AG04450 (cell line): ENCODE measurements at regions of chr10 and their contacts with region 1.

Region 1: DNA sequence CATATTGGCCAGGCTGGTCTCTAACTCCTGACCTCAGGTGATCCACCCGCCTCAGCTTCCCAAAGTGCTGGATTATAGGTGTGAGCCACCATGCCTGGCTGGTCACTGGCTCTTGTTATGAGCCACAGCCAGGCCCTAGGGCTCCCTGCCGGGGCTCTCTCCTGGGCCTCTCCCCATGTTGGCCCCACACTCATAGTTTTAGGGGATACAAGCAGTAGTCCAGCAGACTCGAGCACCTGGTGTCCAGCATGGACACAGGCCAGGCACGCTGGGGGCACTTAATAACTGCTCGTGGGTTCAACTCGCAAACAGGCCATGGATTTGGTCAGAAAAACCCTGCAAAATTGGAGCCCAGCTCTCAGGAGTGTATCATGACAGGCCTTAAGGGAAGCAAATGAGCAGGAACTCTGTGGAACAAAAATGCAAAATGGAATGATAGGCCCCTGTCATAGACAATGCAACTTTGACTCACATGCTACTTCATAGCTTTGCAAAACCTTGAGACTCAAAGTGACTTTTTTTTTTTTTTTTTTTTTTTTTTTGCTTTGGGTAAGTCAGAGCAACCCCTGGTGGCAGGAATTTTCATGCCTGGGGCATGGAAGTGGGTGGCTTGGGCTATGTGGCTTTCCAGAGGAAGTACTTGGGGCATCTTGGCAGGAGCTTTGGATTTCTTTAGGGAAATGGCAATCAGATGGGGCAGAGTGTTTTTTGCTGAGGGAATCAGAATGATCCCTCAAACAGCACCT is 62.5 kb downstream of the TACC2 start:
- DNase-seq: peak; percentile 29
- H3K4me3 ChIP-seq: no peak overlapping the region
- H3K27ac ChIP-seq: no peak overlapping the region
- H3K27me3 ChIP-seq: no peaks in the 10 kb centered on the region
- CTCF ChIP-seq: peak; percentile 84

Region 2: DNA sequence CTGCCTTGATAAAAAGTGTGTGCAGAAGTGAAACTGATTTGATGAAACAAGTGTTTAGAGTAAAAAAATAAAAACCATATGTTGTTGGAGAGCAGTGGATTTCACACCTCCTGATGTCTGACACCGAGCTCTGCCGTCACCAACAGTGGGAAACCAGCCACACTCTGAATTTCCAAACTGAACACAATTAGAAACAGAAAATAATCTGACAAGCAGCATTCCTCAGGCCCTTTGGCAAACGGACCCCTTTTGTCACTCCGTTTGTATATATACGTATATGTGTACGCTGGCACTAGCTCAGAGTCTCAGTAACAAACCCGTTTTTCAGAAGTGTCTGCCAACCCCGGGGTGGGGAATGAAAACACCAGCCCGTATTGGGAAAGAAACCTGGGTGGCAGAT is 30.0 kb before region 1 on chr10:
- CTCF ChIA-PET with region 1: interaction called, 10 read pairs
- POLR2A ChIA-PET with region 1: no interaction called
- DNase-seq: no peak
- H3K4me3 ChIP-seq: peak overlapping the region; percentile 20
- H3K27ac ChIP-seq: no peak overlapping the region
- H3K27me3 ChIP-seq: peaks cover 28% of the 10 kb centered on the region
- CTCF ChIP-seq: no peak

Region 3: DNA sequence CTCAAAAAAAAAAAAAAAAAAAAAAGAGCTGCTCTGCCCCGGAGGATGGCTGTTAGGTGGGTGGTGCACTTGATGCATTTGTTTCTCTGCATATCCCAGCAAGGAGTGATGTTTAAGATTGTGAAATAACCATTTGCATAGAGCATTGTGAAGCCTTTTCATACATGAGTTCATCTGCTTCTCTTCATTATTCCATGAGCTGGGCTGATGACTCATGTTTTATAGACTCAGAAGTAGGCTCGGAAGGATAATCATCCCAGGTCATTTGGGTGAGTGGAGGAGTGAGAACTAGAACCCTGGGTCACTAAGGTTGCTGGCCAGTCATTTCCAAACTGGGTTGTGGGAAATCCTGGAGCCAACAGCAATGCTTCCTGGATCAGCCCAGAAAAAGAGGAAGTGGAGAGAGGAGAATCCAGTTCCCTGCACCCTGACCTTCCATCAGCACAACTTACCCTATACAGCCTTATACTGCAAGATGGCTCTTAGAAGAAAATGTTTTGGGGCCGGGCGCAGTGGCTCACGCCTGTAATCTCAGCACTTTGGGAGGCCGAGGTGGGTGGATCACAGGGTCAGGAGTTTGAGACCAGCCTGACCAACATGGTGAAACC is 17.2 kb before region 1 on chr10:
- CTCF ChIA-PET with region 1: interaction called, 17 read pairs
- POLR2A ChIA-PET with region 1: no interaction called
- DNase-seq: no peak
- H3K4me3 ChIP-seq: no peak overlapping the region
- H3K27ac ChIP-seq: no peak overlapping the region
- H3K27me3 ChIP-seq: peaks cover 19% of the 10 kb centered on the region
- CTCF ChIP-seq: no peak

Region 4: DNA sequence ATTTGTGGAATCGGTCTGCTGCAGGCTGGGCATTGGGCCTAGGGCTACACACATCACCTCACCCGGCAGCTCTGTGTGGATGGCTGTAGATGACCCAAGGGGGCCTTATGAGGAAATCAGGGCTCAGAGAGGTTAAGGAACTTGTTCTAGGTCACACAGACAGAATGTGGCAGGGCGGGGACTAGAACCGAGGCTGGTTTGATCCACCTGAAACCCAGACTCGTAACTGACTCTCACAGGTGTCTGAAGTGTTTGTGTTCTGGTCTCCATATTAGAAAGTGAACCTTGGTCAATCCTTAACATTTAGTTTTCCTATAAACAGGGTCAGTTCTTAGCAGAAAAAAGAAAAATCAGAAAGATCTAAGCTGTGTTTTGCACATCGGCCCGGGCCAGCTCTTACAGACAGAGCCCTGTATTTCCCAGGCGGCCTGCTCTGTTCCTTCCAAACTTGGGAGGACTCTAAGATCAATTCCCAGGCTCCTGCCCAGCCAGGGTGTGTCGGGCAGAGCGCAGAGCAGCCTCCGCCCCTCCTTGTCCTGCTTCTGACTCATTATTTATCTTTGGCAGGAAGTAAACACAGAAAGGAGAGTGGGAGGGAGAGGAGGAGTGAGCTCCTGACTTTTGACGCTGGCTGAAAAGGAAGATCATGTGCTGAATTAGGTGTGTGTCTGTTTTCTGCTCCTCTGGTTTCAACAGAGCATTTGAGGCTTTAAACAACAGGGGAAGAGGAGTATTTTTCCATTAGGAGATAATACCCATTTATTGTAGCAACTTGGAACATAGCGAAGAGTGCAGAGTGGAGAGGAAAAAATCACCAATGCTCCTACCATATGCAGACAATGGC is 11.6 kb after region 1 on chr10:
- CTCF ChIA-PET with region 1: interaction called, 61 read pairs
- POLR2A ChIA-PET with region 1: no interaction called
- DNase-seq: peak; percentile 45
- H3K4me3 ChIP-seq: no peak overlapping the region
- H3K27ac ChIP-seq: peak overlapping the region; percentile 39
- H3K27me3 ChIP-seq: no peaks in the 10 kb centered on the region
- CTCF ChIP-seq: no peak

Region 5: GRCh38 chr10:122072491-122072890 is 21.1 kb after region 1 on chr10:
- CTCF ChIA-PET with region 1: interaction called, 24 read pairs
- POLR2A ChIA-PET with region 1: no interaction called
- DNase-seq: no peak
- H3K4me3 ChIP-seq: no peak overlapping the region
- H3K27ac ChIP-seq: no peak overlapping the region
- H3K27me3 ChIP-seq: peaks cover 2% of the 10 kb centered on the region
- CTCF ChIP-seq: no peak

Region 6: GRCh38 chr10:122078965-122079795 is 27.8 kb after region 1 on chr10:
- CTCF ChIA-PET with region 1: interaction called, 11 read pairs
- POLR2A ChIA-PET with region 1: no interaction called
- DNase-seq: no peak
- H3K4me3 ChIP-seq: no peak overlapping the region
- H3K27ac ChIP-seq: no peak overlapping the region
- H3K27me3 ChIP-seq: peaks cover 26% of the 10 kb centered on the region
- CTCF ChIP-seq: no peak

Region 7: DNA sequence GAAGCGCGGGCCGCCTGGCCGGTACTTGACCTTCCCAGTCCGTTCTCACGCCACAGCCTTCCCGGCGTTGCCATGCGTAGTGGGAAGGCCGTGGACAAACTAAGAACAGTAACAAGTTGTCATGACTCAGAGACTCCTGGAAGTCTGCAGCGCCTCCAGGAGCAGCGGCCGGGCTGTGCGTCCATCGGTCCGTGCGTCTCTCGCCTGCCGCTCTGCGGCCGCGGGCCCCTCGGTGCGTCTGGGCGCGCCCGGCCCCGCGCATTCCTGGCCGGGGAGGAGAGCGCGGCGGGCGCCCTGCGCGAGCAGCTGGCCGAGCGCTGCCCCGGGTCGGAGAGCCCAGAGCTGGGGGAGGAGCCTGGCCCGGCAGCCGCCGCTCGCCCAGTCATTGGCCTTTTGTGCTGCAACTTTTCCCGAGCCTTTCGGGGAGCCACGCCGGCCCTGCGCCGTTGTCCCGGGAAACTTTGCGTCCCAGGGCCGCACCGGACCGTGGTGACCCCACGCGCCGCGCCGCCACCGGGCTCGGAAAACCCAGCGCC is 61.3 kb after region 1 on chr10:
- CTCF ChIA-PET with region 1: interaction called, 12 read pairs
- POLR2A ChIA-PET with region 1: no interaction called
- DNase-seq: peak; percentile 87
- H3K4me3 ChIP-seq: peak overlapping the region; percentile 78
- H3K27ac ChIP-seq: peak overlapping the region; percentile 97
- H3K27me3 ChIP-seq: no peaks in the 10 kb centered on the region
- CTCF ChIP-seq: peak; percentile 57